Activated CD4-positive, alpha-beta T cell treated with anti-CD3 and anti-CD28 coated beads for 36 hours (primary cell): ENCODE measurements at regions of chr5 and their contacts with region 1.

Region 1: DNA sequence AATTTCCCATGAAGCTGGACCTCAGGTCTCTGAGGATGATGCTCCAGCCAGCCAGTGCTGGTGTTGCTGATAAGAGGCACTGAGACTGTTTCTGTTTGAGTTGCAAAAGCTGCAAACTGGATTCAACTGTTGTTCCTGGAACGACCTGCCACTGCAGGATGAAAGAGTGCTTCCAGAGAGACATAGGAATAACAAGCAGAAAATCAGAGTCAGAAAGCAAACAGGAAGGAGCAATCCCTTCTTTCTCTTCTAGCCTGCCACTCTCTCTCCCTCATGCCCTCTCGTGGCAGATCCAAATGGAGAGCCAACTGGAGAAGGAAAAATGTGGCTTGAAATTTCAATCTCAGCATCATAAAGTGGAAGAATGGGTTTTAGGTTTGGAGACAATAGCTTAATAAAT is 110.4 kb downstream of the STARD4 start:
- DNase-seq: no peak
- ATAC-seq: no peak
- H3K4me3 Mint-ChIP-seq: no peak overlapping the region
- H3K27ac Mint-ChIP-seq: no peak overlapping the region
- H3K4me1 Mint-ChIP-seq: peaks cover 21% of the 10 kb centered on the region
- H3K27me3 Mint-ChIP-seq: no peaks in the 10 kb centered on the region

Region 2: GRCh38 chr5:111389390-111390082 is 12.4 kb before region 1 on chr5:
- CTCF ChIA-PET with region 1: interaction called, 10 read pairs
- POLR2A ChIA-PET with region 1: no interaction called
- intact Hi-C with region 1: no loop called
- DNase-seq: peak; percentile 33
- ATAC-seq: peak; percentile 77
- H3K4me3 Mint-ChIP-seq: no peak overlapping the region
- H3K27ac Mint-ChIP-seq: no peak overlapping the region
- H3K4me1 Mint-ChIP-seq: peaks cover 23% of the 10 kb centered on the region
- H3K27me3 Mint-ChIP-seq: no peaks in the 10 kb centered on the region

Region 3: GRCh38 chr5:111439473-111440075 is 37.7 kb after region 1 on chr5:
- CTCF ChIA-PET with region 1: no interaction called
- POLR2A ChIA-PET with region 1: interaction called, 10 read pairs
- intact Hi-C with region 1: no loop called
- DNase-seq: no peak
- ATAC-seq: no peak
- H3K4me3 Mint-ChIP-seq: no peak overlapping the region
- H3K27ac Mint-ChIP-seq: peak overlapping the region; percentile 8
- H3K4me1 Mint-ChIP-seq: peaks cover 16% of the 10 kb centered on the region
- H3K27me3 Mint-ChIP-seq: no peaks in the 10 kb centered on the region

Region 4: DNA sequence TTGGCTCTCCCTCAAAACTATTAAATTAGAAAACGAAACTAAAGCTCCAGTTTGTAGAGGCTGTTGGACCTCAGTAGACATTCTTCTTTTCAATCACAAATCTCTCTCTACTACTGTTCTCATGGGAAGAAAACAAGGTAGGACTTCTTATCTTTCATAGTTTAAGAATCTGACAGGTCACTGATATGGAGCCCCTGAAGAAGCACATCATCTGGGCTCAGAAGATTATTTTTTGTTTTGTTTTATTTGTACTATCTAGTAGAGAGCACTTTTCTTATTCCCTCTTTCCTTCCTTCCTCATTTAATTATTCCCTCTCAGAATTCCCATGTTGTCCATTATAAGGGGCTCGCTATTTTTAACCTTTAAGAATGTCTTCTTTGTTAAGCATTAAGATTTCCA is 84.1 kb after region 1 on chr5:
- CTCF ChIA-PET with region 1: no interaction called
- POLR2A ChIA-PET with region 1: no interaction called
- intact Hi-C with region 1: no loop called
- DNase-seq: no peak
- ATAC-seq: no peak
- H3K4me3 Mint-ChIP-seq: no peak overlapping the region
- H3K27ac Mint-ChIP-seq: peak overlapping the region; percentile 75
- H3K4me1 Mint-ChIP-seq: peaks cover 8% of the 10 kb centered on the region
- H3K27me3 Mint-ChIP-seq: no peaks in the 10 kb centered on the region